A673 (cell line): ENCODE measurements at regions of chr11 and their contacts with region 1.

Region 1: GRCh38 chr11:31240338-31240904 is 129.1 kb downstream of the DCDC1 start:
- DNase-seq: peak; percentile 91
- H3K4me3 ChIP-seq: no peak overlapping the region
- H3K27ac ChIP-seq: no peak overlapping the region
- H3K4me1 ChIP-seq: peaks cover 20% of the 10 kb centered on the region
- H3K27me3 ChIP-seq: no peaks in the 10 kb centered on the region
- CTCF ChIP-seq: peak; percentile 99

Region 2: GRCh38 chr11:30960387-30960992 is 279.9 kb before region 1 on chr11:
- CTCF ChIA-PET with region 1: no interaction called
- POLR2A ChIA-PET with region 1: no interaction called
- intact Hi-C with region 1: loop called (anchors 2 kb)
- DNase-seq: peak; percentile 86
- H3K4me3 ChIP-seq: no peak overlapping the region
- H3K27ac ChIP-seq: no peak overlapping the region
- H3K4me1 ChIP-seq: no peaks in the 10 kb centered on the region
- H3K27me3 ChIP-seq: peaks cover 52% of the 10 kb centered on the region
- CTCF ChIP-seq: peak; percentile 99

Region 3: GRCh38 chr11:31264834-31265233 is 24.4 kb after region 1 on chr11:
- CTCF ChIA-PET with region 1: no interaction called
- POLR2A ChIA-PET with region 1: no interaction called
- intact Hi-C with region 1: no loop called
- DNase-seq: no peak
- H3K4me3 ChIP-seq: no peak overlapping the region
- H3K27ac ChIP-seq: no peak overlapping the region
- H3K4me1 ChIP-seq: no peaks in the 10 kb centered on the region
- H3K27me3 ChIP-seq: peaks cover 15% of the 10 kb centered on the region
- CTCF ChIP-seq: peak; percentile 32; the same call in 1 of the 2 replicates

Region 4: DNA sequence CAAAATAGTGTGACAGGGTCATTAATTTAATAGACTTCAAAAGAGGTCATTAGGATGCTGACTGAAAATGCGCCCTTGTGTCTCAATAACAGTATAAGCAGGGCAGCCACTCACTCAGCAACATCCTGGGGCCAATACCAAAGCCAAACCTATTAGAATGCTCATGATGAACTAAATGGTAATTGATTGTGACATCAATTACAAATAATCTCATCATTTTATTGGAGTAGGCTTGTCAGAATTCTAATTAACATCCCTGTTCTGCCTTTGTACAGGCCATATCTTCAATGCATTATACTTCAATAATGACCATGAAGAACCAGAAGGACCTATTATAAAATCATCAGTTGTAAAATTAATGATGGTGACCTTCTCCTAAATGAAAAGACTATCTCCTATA is 193.4 kb after region 1 on chr11:
- CTCF ChIA-PET with region 1: no interaction called
- POLR2A ChIA-PET with region 1: no interaction called
- intact Hi-C with region 1: no loop called
- DNase-seq: no peak
- H3K4me3 ChIP-seq: no peak overlapping the region
- H3K27ac ChIP-seq: no peak overlapping the region
- H3K4me1 ChIP-seq: no peaks in the 10 kb centered on the region
- H3K27me3 ChIP-seq: no peaks in the 10 kb centered on the region
- CTCF ChIP-seq: no peak

Region 5: GRCh38 chr11:31487848-31488247 is 247.4 kb after region 1 on chr11:
- CTCF ChIA-PET with region 1: no interaction called
- POLR2A ChIA-PET with region 1: no interaction called
- intact Hi-C with region 1: loop called (anchors 10 kb)
- DNase-seq: peak; percentile 91
- H3K4me3 ChIP-seq: no peak overlapping the region
- H3K27ac ChIP-seq: no peak overlapping the region
- H3K4me1 ChIP-seq: peaks cover 6% of the 10 kb centered on the region
- H3K27me3 ChIP-seq: no peaks in the 10 kb centered on the region
- CTCF ChIP-seq: peak; percentile 92

Region 6: DNA sequence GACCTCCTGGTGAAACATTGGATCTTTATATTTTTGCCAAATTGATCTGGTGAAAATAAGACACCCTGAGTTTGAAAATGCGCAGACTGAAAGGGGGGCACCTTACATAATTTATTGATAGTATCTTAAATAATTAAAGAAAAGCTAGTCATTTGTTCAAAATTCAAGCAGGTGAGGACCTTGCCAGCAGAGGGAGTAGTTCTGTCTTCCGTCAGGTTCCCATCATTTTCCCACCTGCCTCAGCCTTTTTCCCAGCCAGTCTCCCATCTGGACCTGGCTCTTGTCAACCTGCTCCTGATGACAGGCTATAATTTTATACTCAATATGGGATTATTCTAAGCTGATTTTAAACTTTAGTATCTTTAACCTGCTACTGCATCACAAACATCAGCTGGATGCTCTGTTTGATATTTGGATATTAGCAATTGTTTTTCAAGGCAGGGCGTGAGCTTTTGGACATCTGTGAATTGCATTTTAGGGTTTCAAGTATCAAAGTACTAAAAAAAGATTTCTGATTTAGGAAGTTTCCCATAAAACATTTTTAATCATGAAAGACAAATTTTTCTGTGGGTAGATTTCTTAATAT is 401.1 kb after region 1 on chr11:
- CTCF ChIA-PET with region 1: no interaction called
- POLR2A ChIA-PET with region 1: no interaction called
- intact Hi-C with region 1: loop called (anchors 5 kb)
- DNase-seq: peak; percentile 74
- H3K4me3 ChIP-seq: no peak overlapping the region
- H3K27ac ChIP-seq: no peak overlapping the region
- H3K4me1 ChIP-seq: peaks cover 11% of the 10 kb centered on the region
- H3K27me3 ChIP-seq: no peaks in the 10 kb centered on the region
- CTCF ChIP-seq: peak; percentile 99

Region 7: GRCh38 chr11:32006799-32007388 is 766.5 kb after region 1 on chr11:
- CTCF ChIA-PET with region 1: interaction called, 5 read pairs
- POLR2A ChIA-PET with region 1: no interaction called
- intact Hi-C with region 1: loop called (anchors 5 kb)
- DNase-seq: peak; percentile 89
- H3K4me3 ChIP-seq: no peak overlapping the region
- H3K27ac ChIP-seq: no peak overlapping the region
- H3K4me1 ChIP-seq: no peaks in the 10 kb centered on the region
- H3K27me3 ChIP-seq: peaks cover 91% of the 10 kb centered on the region
- CTCF ChIP-seq: peak; percentile 100

Region 8: DNA sequence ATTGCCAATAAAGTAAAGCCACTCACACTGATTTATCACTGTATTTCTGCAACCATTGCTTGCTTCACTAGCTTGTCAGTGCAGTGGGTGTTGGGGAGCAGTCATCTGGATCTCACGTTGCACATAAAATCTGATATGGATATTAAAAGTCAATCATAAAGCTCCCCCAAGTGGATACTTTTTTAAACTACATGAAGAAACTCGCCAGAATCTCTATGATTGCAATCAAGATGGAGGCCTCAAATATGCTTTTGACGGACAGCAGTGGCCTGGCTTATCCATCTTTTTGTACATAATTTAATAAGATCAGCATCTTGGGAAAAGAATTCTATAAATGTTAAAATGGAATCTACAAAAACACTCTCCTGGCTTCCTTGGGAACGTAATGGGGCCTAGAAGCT is 1057.2 kb after region 1 on chr11:
- CTCF ChIA-PET with region 1: no interaction called
- POLR2A ChIA-PET with region 1: no interaction called
- intact Hi-C with region 1: loop called (anchors 1 kb)
- DNase-seq: peak; percentile 90
- H3K4me3 ChIP-seq: no peak overlapping the region
- H3K27ac ChIP-seq: no peak overlapping the region
- H3K4me1 ChIP-seq: no peaks in the 10 kb centered on the region
- H3K27me3 ChIP-seq: no peaks in the 10 kb centered on the region
- CTCF ChIP-seq: peak; percentile 88